ENCODE measurements at regions of chr2 and their contacts with region 1.

Region 1: GRCh38 chr2:209334198-209335017 is 89.4 kb upstream of the MAP2 start:
- DNase-seq: peak; percentile 78
- H3K4me3 Mint-ChIP-seq: no peak overlapping the region
- H3K27ac Mint-ChIP-seq: no peak overlapping the region
- H3K4me1 Mint-ChIP-seq: no peaks in the 10 kb centered on the region
- H3K27me3 Mint-ChIP-seq: no peaks in the 10 kb centered on the region

Region 2: DNA sequence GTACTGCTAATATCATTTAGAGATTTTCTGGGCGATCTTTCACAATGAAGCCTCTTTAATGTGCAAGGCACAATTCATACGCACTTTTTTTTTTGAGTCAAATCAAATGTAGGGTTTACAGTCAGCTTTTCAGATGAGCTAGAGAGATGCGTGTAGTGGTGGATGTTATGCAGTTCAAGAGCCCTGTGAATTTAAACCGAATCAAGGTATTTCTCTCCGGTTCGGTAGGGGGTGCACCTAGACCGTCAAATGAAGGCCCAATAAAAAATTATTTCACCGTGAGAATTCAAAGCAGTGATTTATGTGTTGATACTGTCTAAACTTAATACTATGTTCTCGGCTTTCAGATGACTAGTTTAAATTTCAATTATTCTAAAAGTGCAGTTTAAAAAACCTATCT is 926.7 kb before region 1 on chr2:
- intact Hi-C with region 1: loop called (anchors 10 kb)
- DNase-seq: no peak
- H3K4me3 Mint-ChIP-seq: no peak overlapping the region
- H3K27ac Mint-ChIP-seq: no peak overlapping the region
- H3K4me1 Mint-ChIP-seq: no peaks in the 10 kb centered on the region
- H3K27me3 Mint-ChIP-seq: peaks cover 63% of the 10 kb centered on the region

Region 3: DNA sequence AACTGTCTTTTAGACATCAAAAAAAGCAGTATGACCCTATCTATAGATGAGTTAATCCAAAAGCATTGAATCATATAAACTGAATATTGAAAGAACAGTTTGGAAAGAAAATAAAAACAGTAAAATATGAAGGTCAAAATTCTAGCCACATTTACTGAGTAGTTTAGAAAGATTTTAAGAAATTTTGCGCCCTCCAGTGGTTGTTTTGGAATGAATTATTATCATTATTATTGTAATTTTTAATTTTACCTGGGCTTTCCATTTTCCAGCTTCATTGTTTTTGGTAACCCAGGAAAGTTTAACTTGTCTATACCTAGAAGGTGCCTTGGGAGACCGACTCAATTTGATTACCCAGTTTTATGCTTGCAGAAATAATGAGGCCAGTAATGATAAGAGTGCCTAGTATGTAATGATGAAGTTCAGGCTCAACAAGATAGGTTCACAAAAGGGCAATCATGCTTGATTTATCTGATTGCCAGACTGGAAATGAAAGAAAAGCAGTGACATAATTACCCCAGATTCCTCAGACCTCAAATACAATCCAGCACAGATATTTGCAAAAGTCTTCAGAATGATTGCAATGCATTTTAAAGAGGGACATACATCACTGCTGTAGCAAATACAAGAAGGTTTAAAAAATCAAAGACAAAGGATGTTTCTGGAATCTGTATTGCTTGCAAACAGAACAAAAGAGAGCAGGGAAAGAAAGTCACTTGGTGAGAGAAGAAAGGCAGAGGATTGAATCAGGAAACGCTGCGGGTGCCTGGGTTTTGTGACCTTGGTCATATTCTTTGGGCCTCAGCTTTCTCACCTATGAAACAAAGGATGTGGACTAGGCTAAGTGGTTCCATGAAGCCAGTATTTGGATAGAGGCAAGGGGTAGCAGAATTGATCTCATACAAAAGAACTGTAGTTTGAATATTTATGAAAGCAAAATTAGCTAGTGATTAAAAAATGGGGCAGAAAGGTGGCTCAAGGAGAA is 243.3 kb after region 1 on chr2:
- intact Hi-C with region 1: loop called (anchors 1 kb)
- DNase-seq: no peak
- H3K4me3 Mint-ChIP-seq: no peak overlapping the region
- H3K27ac Mint-ChIP-seq: no peak overlapping the region
- H3K4me1 Mint-ChIP-seq: peaks cover 2% of the 10 kb centered on the region
- H3K27me3 Mint-ChIP-seq: peaks cover 5% of the 10 kb centered on the region

Measured in activated CD4-positive, alpha-beta T cell treated with anti-CD3 and anti-CD28 coated beads, Interleukin-2, amount 10 ng/mL, durations not matched to agents 24 days and 14 days (primary cell).